Mammary epithelial cell (primary cell): ENCODE measurements at regions of chr19 and their contacts with region 1.

Region 1: GRCh38 chr19:52219611-52220010 is 29.8 kb downstream of the PPP2R1A start:
- DNase-seq: no peak
- H3K4me3 ChIP-seq: no peak overlapping the region
- H3K27ac ChIP-seq: no peak overlapping the region
- H3K4me1 ChIP-seq: no peaks in the 10 kb centered on the region
- H3K27me3 ChIP-seq: no peaks in the 10 kb centered on the region
- CTCF ChIP-seq: no peak

Region 2: GRCh38 chr19:52285466-52285865 is 65.9 kb after region 1 on chr19:
- CTCF ChIA-PET with region 1: no interaction called
- dilution Hi-C with region 1: loop called (anchors 5 kb)
- in situ Hi-C with region 1: no loop called
- intact Hi-C with region 1: no loop called
- DNase-seq: no peak
- H3K4me3 ChIP-seq: no peak overlapping the region
- H3K27ac ChIP-seq: no peak overlapping the region
- H3K4me1 ChIP-seq: no peaks in the 10 kb centered on the region
- H3K27me3 ChIP-seq: no peaks in the 10 kb centered on the region
- CTCF ChIP-seq: no peak